ACHN (cell line): ENCODE measurements at regions of chr3 and their contacts with region 1.

Region 1: GRCh38 chr3:58151637-58152036 is 59.1 kb downstream of the DNASE1L3 start:
- DNase-seq: no peak

Region 2: GRCh38 chr3:58093573-58094195 is 58.0 kb before region 1 on chr3:
- in situ Hi-C with region 1: loop called (anchors 10 kb)
- DNase-seq: peak; percentile 21